ENCODE measurements at regions of chr10 and their contacts with region 1.

Region 1: DNA sequence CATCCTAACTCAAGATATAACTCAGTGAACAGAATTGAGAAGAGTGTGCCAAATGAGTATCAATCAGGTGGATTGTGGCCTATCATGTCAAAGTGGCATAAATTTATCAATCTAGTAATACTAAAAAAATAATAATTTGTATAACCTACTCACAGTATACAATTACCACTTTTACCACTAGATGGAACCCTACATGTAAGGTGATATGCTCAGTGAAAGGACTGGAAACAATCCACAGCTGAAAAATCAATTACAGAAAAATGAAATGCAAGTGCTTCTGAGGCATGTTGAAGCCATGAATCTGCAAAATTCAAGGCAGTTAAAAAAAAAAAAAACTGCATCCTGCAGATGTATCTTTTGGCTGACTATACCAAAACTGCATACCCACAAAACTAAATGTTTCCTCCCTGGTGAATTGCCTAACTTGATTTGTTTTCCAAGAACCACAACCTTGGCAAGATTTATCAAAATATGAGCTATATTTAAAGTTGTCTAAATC is 13.9 kb downstream of the ARHGAP19 start:
- DNase-seq: no peak
- H3K4me3 ChIP-seq: no peak overlapping the region
- H3K27ac ChIP-seq: peak overlapping the region; percentile 40 to 66
- H3K4me1 ChIP-seq: peaks cover 9 to 16% of the 10 kb centered on the region in 2 donors
- H3K27me3 ChIP-seq: no peaks in the 10 kb centered on the region
- CTCF ChIP-seq: peak; percentile 53 to 67 (median 56)

Region 2: DNA sequence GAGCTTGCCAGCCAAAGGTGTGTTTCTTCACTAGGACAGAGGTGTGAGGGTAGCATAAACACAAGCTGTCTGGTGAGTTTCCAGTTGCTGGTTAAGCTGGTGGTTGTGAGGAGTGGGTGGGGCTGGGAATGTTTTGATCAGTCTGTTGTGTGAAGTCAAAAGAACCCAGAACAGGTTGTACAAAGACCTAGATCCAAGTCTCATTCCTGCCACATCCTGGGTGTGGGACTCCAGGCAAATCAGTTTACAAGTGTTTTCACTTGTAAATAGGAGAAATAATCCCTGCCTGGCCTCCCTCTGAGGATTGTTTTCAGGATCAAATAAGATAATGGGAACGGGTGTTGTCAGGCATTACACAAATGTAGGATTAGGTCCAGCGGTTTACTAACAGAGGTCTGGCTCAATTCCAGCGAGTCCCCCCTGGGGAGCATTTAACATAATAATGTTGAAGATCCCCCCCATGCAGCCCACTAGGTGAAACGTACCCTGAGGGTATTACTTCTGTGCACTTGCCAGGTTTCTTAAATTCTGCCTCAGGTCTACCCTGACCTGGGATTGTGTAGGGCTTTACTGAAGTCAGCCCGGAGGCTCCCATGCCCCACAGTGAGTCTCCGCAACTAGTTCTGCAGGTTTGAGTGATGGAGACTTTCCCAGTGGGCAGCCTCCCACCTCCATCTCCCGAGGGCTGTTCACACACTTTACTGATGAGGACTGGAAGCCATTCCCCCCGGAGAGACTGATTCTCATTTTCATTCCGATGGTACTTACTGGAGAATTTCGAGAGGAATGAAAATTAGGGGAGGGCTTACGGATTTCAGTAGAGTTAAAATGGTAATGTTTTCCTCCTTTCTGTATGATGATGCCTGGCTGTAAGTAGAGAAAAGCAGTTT is 58.6 kb after region 1 on chr10:
- intact Hi-C with region 1: no loop called
- DNase-seq: no peak
- H3K4me3 ChIP-seq: peak overlapping the region in 1 of 2 donors; percentile 16
- H3K27ac ChIP-seq: peak overlapping the region; percentile 20 to 46
- H3K4me1 ChIP-seq: peaks cover 0 to 29% of the 10 kb centered on the region in 2 donors
- H3K27me3 ChIP-seq: no peaks in the 10 kb centered on the region
- CTCF ChIP-seq: no peak

Region 3: DNA sequence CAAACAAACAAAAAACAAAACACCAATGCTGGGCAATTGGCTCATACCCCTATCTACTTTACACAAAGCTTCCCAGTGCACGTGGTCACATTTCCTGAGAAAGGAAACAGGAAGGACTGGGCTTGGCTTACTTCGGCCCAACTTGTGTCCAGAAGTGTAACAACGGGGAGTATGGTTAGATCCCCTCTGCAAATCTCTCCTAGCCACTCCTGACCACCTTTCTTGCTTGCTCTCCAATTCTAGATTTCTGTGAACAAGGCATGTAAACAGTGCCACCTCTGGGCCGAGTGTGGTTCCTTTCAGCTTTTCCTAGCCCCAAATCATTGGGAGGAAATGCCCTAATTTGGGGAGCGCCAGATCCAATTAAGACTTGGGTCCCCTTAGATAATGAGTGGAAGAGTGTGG is 77.0 kb after region 1 on chr10:
- intact Hi-C with region 1: loop called (anchors 2 kb)
- DNase-seq: no peak
- H3K4me3 ChIP-seq: no peak overlapping the region
- H3K27ac ChIP-seq: no peak overlapping the region
- H3K4me1 ChIP-seq: no peaks in the 10 kb centered on the region
- H3K27me3 ChIP-seq: no peaks in the 10 kb centered on the region
- CTCF ChIP-seq: peak; percentile 14 to 50 (median 24)

Region 4: GRCh38 chr10:97914837-97915211 is 636.3 kb after region 1 on chr10:
- intact Hi-C with region 1: no loop called
- DNase-seq: peak in 1 of 2 donors; percentile 73
- H3K4me3 ChIP-seq: no peak overlapping the region
- H3K27ac ChIP-seq: no peak overlapping the region
- H3K4me1 ChIP-seq: no peaks in the 10 kb centered on the region
- H3K27me3 ChIP-seq: no peaks in the 10 kb centered on the region
- CTCF ChIP-seq: peak; percentile 60 to 87 (median 83)